Right cardiac atrium (tissue), 5 donors: ENCODE measurements at regions of chr16 and their contacts with region 1.

Region 1: DNA sequence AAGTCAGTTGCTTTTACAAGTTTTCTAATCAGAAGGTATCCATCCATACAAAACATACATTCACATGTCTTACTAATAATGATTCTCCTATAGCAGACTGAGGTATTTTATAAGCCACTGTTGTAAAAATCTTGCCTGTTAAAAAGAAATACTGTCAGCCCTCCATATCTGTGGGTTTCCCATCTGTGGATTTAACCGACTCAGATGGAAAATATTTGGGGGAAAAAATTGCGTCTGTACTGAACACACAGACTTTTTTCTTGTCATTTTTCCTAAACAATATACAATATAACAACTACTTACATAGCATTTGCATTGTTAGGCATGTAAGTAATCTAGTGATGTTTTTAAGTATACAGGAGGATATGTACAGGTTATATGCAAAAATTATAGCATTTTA is 90.4 kb downstream of the PARN start:
- DNase-seq: no peak
- ATAC-seq: no peak
- H3K4me3 ChIP-seq: no peak overlapping the region
- H3K27ac ChIP-seq: no peak overlapping the region
- H3K4me1 ChIP-seq: no peaks in the 10 kb centered on the region
- H3K27me3 ChIP-seq: no peaks in the 10 kb centered on the region

Region 2: DNA sequence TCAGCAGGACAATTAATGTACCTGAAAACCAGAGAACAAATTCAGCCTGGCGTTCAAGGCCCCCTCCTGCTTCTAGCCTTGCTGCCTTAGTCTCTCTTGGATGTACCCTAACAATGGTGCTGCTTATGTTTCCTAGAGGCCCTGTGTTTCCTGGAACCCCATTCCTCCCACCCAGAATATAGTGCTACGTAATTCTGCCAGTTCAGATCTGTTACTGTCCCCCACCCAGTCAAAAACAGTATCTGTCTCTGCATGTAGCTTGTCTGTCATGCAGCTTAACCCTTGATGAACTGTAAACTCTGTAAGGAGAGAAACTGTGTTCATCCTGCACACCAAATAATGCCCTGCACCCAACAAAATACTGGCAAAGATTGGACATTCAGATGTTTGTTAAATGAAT is 461.7 kb before region 1 on chr16:
- intact Hi-C with region 1: no loop called
- DNase-seq: no peak
- ATAC-seq: no peak
- H3K4me3 ChIP-seq: no peak overlapping the region
- H3K27ac ChIP-seq: no peak overlapping the region
- H3K4me1 ChIP-seq: no peaks in the 10 kb centered on the region
- H3K27me3 ChIP-seq: no peaks in the 10 kb centered on the region

Region 3: GRCh38 chr16:14249291-14250032 is 290.2 kb before region 1 on chr16:
- intact Hi-C with region 1: loop called in 1 of 4 experiments (anchors 10 kb)
- DNase-seq: no peak
- ATAC-seq: no peak
- H3K4me3 ChIP-seq: no peak overlapping the region
- H3K27ac ChIP-seq: no peak overlapping the region
- H3K4me1 ChIP-seq: no peaks in the 10 kb centered on the region
- H3K27me3 ChIP-seq: no peaks in the 10 kb centered on the region

Region 4: GRCh38 chr16:14632692-14633569 is 93.3 kb after region 1 on chr16 and contains the start of gene BFAR:
- intact Hi-C with region 1: no loop called
- DNase-seq: peak; percentile 100
- ATAC-seq: peak; percentile 94 to 96
- H3K4me3 ChIP-seq: peak within 1 kb of the TSS; percentile 85
- H3K27ac ChIP-seq: peak within 1 kb of the TSS; percentile 97
- H3K4me1 ChIP-seq: no peaks in the 10 kb centered on the region
- H3K27me3 ChIP-seq: no peaks in the 10 kb centered on the region
- total RNA-seq, gene BFAR: 27.1 to 32.6 (median 30.1) TPM